ENCODE measurements at regions of chr2 and their contacts with region 1.

Region 1: GRCh38 chr2:71923887-71924533 is 223.7 kb downstream of the CYP26B1 start:
- DNase-seq: peak; percentile 54 to 88 (median 72)
- H3K4me3 ChIP-seq: no peak overlapping the region
- H3K27ac ChIP-seq: no peak overlapping the region
- H3K4me1 ChIP-seq: no peaks in the 10 kb centered on the region
- H3K27me3 ChIP-seq: no peaks in the 10 kb centered on the region
- CTCF ChIP-seq: peak; percentile 68 to 88 (median 84)
- POLR2A ChIP-seq: no peak

Region 2: DNA sequence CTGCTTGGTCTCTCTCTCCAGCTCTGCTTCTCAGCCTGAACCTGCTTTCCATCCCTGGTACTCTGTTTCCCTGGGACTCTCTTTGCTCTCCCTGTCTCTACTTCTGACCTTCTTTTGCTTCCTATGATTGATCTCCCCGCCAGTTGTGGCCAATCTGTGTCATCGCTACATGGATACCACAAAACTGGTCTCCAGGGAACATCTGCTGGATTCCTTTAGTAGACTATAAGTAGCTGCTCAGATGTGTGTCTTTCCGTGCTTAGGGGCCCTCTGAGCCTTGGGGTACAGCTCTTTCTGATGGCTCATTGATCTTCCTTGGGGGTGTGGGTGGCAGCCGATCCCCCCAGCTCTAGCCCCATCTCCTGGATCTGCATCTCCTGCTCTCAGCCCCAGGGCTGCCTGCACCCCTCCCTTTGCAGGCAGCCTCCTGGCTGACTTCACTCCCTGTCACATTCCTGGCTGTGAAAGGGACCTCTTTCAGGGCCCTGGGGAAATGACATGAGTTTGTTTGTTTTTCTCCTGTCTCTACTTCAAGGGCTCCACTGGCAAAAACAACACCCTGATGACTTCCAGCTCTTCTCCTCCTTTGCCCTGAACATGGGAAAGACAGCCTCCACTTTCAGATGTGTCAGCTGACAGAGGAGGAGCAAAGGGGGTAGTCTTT is 110.1 kb before region 1 on chr2:
- intact Hi-C with region 1: loop called in 1 of 2 experiments (anchors 10 kb)
- DNase-seq: peak in 1 of 7 donors; percentile 46
- H3K4me3 ChIP-seq: no peak overlapping the region
- H3K27ac ChIP-seq: no peak overlapping the region
- H3K4me1 ChIP-seq: no peaks in the 10 kb centered on the region
- H3K27me3 ChIP-seq: no peaks in the 10 kb centered on the region
- CTCF ChIP-seq: no peak
- POLR2A ChIP-seq: no peak

Region 3: DNA sequence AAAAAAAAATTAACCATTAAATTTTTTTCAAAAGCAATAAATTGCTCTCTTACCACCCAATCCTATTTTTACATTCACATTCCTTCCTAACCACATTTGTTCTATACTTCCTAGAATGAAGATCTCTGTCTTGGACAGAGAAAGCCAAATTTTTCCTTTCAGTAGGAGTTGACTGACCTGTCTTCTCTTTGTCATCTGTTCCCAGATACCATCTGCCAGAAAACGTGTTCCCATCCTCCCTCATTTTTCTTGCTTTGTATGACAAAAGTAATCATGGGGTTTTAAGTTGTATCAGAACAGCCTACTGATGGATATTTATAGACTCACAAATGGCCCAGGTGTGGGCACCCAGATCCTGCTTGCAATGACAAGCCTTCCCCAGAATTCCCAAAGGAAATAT is 41.5 kb after region 1 on chr2:
- intact Hi-C with region 1: no loop called
- DNase-seq: no peak
- H3K4me3 ChIP-seq: no peak overlapping the region
- H3K27ac ChIP-seq: no peak overlapping the region
- H3K4me1 ChIP-seq: no peaks in the 10 kb centered on the region
- H3K27me3 ChIP-seq: peaks cover 6% of the 10 kb centered on the region
- CTCF ChIP-seq: no peak
- POLR2A ChIP-seq: no peak

Region 4: DNA sequence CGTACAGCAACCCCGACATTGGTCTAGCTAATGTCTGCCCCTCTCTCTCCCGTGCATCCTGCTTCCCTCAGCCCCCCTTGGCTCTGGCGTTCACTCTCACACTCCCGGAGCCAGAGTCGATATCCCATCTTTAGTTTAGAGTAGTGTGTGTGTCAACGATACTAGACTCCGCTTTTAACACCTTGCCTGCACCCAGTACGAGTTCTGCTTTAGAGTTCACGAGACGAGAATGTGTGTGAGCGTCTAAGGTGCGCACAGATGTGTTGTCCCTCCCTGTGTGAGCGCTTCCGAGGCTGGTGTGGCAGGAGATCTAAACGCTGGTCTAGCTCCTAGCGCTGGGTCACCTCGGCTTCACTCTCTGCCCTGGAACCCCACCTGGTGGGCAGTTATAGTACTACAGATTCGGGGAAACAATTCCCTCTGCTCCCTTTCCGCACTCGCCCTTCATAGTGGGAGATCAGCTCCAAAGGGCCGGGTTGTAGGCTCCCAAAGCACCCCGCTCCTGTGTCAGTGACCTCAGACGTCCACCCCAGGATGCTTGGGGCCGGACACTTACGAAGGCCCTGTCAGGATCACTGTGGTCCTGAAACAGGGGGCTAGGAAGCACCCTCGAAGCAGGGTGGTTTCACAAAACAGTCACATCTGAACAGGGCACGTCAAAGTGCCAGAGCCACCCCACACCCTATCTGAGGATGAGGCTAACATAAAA is 226.3 kb after region 1 on chr2:
- intact Hi-C with region 1: loop called (anchors 2 to 10 kb)
- DNase-seq: peak; percentile 73 to 89 (median 84)
- H3K4me3 ChIP-seq: peak overlapping the region in 1 of 4 donors; percentile 58
- H3K27ac ChIP-seq: no peak overlapping the region
- H3K4me1 ChIP-seq: peaks cover 31 to 32% of the 10 kb centered on the region in 2 donors
- H3K27me3 ChIP-seq: peaks cover 36% of the 10 kb centered on the region
- CTCF ChIP-seq: peak; percentile 85 to 92 (median 89)
- POLR2A ChIP-seq: no peak

Region 5: DNA sequence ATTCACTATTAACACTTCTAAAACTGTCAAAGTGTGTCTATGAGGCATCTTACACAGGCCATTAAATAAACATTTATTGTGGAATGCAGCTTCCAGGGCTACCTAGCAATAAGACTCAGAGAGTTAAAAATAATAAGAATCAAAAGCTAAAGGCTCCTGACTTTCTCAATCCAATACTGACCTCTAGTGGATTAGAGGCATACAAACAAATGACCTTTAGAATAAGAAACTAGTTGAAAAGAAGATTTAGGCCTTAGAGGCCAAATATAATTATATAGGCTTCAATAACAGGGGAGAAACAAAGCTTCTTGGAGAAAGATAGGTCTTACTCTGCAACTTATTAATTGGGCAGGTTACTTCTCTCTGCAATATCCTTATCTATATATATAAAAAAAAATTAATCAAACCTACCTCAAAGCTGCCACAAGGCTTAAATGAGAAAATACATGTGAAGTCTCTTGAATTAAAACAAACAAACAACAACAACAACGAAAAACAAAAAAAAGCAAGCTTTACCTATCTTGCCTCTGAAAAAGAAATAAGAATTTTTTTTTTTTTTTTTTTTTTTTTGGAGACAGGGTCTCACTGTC is 655.7 kb after region 1 on chr2:
- intact Hi-C with region 1: loop called in 1 of 2 experiments (anchors 10 kb)
- DNase-seq: no peak
- H3K4me3 ChIP-seq: no peak overlapping the region
- H3K27ac ChIP-seq: no peak overlapping the region
- H3K4me1 ChIP-seq: peaks cover 0 to 14% of the 10 kb centered on the region in 2 donors
- H3K27me3 ChIP-seq: no peaks in the 10 kb centered on the region
- CTCF ChIP-seq: peak; percentile 46 to 79 (median 70)
- POLR2A ChIP-seq: no peak

Region 6: GRCh38 chr2:72745679-72746368 is 821.8 kb after region 1 on chr2:
- intact Hi-C with region 1: loop called in 1 of 2 experiments (anchors 10 kb)
- DNase-seq: peak in 1 of 7 donors; percentile 26
- H3K4me3 ChIP-seq: no peak overlapping the region
- H3K27ac ChIP-seq: no peak overlapping the region
- H3K4me1 ChIP-seq: peaks cover 7 to 8% of the 10 kb centered on the region in 2 donors
- H3K27me3 ChIP-seq: no peaks in the 10 kb centered on the region
- CTCF ChIP-seq: peak; percentile 48 to 84 (median 70)
- POLR2A ChIP-seq: no peak